HepG2 (cell line): ENCODE measurements at regions of chr1 and their contacts with region 1.

Region 1: GRCh38 chr1:43650310-43651085 is 549 bp downstream of the KDM4A start:
- DNase-seq: peak; percentile 96
- ATAC-seq: peak; percentile 79
- H3K4me3 ChIP-seq: peak overlapping the region; percentile 83 to 92 (median 88)
- H3K27ac ChIP-seq: peak overlapping the region; percentile 89
- H3K4me1 ChIP-seq: peaks cover 27% of the 10 kb centered on the region
- H3K27me3 ChIP-seq: no peaks in the 10 kb centered on the region; a peak in 1 of 5 replicates
- CTCF ChIP-seq: no peak; the same call in 1 of the 2 replicates
- EP300 ChIP-seq: 0 out of 4 replicates have a peak, but pooled peaks of 1 of the 2 experiments have one; percentile 4
- POLR2A ChIP-seq: peak; percentile 95 to 99
- RAD21 ChIP-seq: peak; percentile 52

Region 2: GRCh38 chr1:43545695-43546387 is 104.7 kb before region 1 on chr1:
- CTCF ChIA-PET with region 1: no interaction called
- POLR2A ChIA-PET with region 1: interaction called, 29 read pairs
- in situ Hi-C with region 1: no loop called
- intact Hi-C with region 1: no loop called
- DNase-seq: peak; percentile 98
- ATAC-seq: peak; percentile 73
- H3K4me3 ChIP-seq: peak overlapping the region in 1 of 3 experiments; percentile 55; a peak in 2 of 6 replicates
- H3K27ac ChIP-seq: peak overlapping the region; percentile 96
- H3K4me1 ChIP-seq: peaks cover 90% of the 10 kb centered on the region
- H3K27me3 ChIP-seq: no peaks in the 10 kb centered on the region
- CTCF ChIP-seq: peak; percentile 35
- EP300 ChIP-seq: peak; percentile 87 to 96
- POLR2A ChIP-seq: no peak
- RAD21 ChIP-seq: no peak

Region 3: GRCh38 chr1:43558346-43558841 is 92.1 kb before region 1 on chr1:
- CTCF ChIA-PET with region 1: no interaction called
- POLR2A ChIA-PET with region 1: no interaction called
- in situ Hi-C with region 1: no loop called
- intact Hi-C with region 1: no loop called
- DNase-seq: no peak
- ATAC-seq: no peak; the same call in 2 of the 3 replicates
- H3K4me3 ChIP-seq: no peak overlapping the region
- H3K27ac ChIP-seq: no peak overlapping the region
- H3K4me1 ChIP-seq: peaks cover 19% of the 10 kb centered on the region
- H3K27me3 ChIP-seq: no peaks in the 10 kb centered on the region
- CTCF ChIP-seq: no peak
- EP300 ChIP-seq: no peak
- POLR2A ChIP-seq: no peak
- RAD21 ChIP-seq: no peak

Region 4: DNA sequence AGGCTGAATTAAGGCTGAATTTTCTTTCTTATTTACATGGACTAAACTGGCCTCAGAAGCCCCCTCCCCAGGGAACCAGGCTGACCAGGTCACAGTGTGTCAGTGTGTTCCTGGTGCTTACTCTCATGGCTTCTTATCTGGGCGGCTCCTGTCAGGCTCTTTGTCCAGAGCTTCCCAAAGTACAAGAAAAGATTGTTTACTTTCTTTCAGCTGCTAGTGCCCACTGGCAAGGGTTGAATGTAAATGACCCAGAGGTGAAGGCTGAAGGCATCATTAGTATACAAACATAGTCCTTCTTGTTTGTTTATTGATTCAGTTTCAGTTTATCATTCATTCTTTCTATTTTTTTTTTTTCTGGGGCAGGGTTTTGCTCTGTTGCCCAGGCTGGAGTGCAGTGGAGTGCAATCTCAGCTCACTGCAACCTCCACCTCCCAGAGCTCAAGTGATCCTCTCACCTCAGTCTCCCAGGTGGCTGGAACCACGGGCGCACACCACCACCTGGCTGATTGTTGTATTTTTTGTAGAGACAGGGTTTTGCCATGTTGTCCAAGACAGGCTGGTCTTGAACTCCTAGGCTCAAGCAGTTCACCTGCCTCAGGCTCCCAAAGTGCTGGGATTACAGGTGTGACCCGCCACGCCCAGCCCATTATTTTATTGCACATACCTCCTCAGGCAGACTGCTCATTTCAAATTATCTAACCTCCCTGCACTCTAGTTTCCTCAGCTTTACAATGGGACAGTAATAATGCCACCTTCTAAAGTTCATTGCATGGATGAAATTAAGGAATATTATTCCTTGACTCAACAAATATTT is 10.3 kb before region 1 on chr1:
- CTCF ChIA-PET with region 1: no interaction called
- POLR2A ChIA-PET with region 1: interaction called, 15 read pairs
- in situ Hi-C with region 1: no loop called
- intact Hi-C with region 1: no loop called
- DNase-seq: no peak
- ATAC-seq: peak; percentile 71
- H3K4me3 ChIP-seq: no peak overlapping the region
- H3K27ac ChIP-seq: no peak overlapping the region
- H3K4me1 ChIP-seq: peaks cover 27% of the 10 kb centered on the region
- H3K27me3 ChIP-seq: peaks cover 2 to 15% of the 10 kb centered on the region in 2 experiments; a peak in 2 of 5 replicates
- CTCF ChIP-seq: peak; percentile 46
- EP300 ChIP-seq: no peak
- POLR2A ChIP-seq: no peak
- RAD21 ChIP-seq: no peak

Region 5: DNA sequence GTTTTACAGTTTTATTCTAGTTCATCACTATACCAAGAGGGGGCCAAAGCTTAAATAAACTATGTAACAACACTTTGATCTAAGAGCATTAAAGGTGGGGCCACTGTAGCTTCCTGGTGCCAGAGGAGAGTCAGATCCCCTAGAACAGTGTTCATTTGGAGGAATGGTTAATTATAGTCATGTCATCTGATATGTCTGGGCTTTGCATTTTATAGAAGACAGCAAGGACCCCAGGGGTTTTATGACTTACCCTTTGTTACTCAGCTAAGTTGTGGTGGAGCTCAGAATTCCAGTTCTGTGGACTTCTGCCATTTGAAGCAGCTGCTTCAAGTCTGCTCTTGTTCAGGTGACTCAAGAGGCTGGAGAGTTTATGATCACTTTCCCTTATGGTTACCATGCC is 16.1 kb after region 1 on chr1:
- CTCF ChIA-PET with region 1: no interaction called
- POLR2A ChIA-PET with region 1: interaction called, 13 read pairs
- in situ Hi-C with region 1: no loop called
- intact Hi-C with region 1: no loop called
- DNase-seq: no peak
- ATAC-seq: no peak
- H3K4me3 ChIP-seq: no peak overlapping the region
- H3K27ac ChIP-seq: no peak overlapping the region
- H3K4me1 ChIP-seq: no peaks in the 10 kb centered on the region
- H3K27me3 ChIP-seq: no peaks in the 10 kb centered on the region
- CTCF ChIP-seq: no peak
- EP300 ChIP-seq: no peak
- POLR2A ChIP-seq: no peak
- RAD21 ChIP-seq: no peak

Region 6: GRCh38 chr1:43706598-43707495 is 56.3 kb after region 1 on chr1:
- CTCF ChIA-PET with region 1: no interaction called
- POLR2A ChIA-PET with region 1: interaction called, 21 read pairs
- in situ Hi-C with region 1: no loop called
- intact Hi-C with region 1: no loop called
- DNase-seq: peak; percentile 82
- ATAC-seq: peak; percentile 96
- H3K4me3 ChIP-seq: peak overlapping the region; percentile 64 to 96 (median 85)
- H3K27ac ChIP-seq: peak overlapping the region; percentile 76
- H3K4me1 ChIP-seq: peaks cover 30% of the 10 kb centered on the region
- H3K27me3 ChIP-seq: no peaks in the 10 kb centered on the region; a peak in 1 of 5 replicates
- CTCF ChIP-seq: no peak
- EP300 ChIP-seq: no peak
- POLR2A ChIP-seq: peak; percentile 95 to 99
- RAD21 ChIP-seq: no peak